Psoas muscle (tissue), 8 donors: ENCODE measurements at regions of chr20 and their contacts with region 1.

Region 1: DNA sequence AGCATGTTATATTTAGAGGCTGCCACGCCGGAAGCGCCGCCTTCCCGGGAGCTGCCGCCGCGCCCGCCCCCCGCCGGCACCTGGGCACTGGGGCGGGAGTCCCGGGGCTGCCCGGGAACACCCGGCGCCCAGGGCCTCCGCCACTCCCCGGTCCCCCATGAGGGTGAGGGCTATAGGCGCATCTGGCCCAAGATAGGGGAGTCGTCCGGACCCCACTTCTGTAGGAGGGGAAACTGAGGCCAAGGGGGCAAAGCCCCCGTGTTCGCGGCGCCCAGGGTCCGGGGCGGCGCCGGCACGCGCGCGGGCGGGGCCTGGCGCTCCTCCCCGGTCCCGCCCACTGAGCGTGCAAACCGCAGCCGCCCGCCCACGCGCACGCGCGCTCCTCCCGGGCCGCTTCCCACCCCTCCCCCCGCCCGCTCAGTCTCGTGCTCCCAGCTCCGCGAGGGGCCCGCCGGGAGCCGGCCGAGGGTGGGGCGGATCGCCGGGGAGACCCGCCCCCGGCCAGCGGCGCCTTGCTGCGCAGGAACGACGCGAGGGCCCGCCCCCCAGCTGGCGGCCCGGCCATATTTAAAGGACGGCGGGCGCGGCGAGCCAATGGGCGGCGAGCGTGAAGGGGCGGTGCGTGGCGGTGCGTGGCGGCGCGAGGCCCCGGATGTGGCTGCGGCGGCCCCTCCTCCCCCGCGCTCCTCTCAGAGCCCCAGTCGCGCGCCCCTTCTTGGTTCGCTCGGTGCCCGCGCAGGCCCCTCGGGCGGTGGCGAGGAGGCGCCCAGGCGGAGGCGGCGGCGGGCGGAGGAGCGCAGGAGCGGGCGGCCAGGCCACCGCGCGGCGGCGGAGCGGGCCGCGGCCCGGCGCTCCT is at the start of gene LSM14B:
- DNase-seq: peak; percentile 98
- ATAC-seq: peak; percentile 82 to 89 (median 83)
- H3K4me3 ChIP-seq: peak within 1 kb of the TSS; percentile 81
- H3K27ac ChIP-seq: peak within 1 kb of the TSS; percentile 99
- H3K4me1 ChIP-seq: peaks cover 59% of the 10 kb centered on the region
- H3K27me3 ChIP-seq: no peaks in the 10 kb centered on the region
- CTCF ChIP-seq: no peak
- total RNA-seq, gene LSM14B: 52.4 to 67.0 (median 60.8) TPM

Region 2: DNA sequence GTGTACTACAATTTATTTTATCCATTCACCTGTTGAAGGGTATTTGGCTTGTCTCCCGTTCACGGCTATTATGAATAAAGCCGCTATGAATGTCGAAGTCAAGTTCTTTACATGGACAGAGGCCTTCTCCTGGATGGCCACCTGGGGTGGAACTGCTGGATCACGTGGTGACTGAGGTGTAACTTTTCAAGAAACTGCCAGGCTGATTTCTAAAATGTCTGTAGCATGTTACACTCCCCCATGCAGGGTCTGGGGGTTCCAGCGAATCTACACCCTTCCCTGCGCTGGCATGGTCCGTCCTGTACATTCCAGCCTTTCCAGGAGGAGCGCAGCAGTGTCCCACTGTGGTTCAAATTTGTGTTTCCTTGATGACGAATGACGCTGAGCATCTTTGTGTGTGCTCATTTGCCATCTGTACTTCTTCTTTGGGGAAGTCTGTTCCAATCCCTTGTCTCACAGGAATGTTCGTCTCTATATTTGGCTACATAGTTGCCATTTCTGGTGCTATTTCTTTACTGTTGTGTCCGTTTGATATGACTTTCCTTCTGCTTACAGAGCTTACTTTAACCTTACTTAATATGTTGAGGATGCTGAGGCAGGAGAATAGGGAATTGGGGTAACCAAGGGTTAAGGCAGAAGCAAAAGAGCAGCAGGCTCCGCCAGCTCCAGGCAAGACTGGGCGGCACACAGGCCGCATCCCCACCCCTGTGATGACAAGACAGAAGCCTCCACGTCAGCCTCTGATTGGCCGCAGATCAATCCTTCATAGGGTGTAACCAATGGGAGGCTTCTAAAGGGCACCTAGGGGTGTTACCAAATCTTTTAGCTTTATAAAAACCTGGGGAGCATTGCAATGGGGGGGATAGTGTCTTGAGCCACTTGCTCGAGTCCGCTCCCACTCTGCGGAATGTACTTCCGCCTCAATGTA is 163.0 kb before region 1 on chr20:
- intact Hi-C with region 1: no loop called
- DNase-seq: no peak
- ATAC-seq: no peak
- H3K4me3 ChIP-seq: no peak overlapping the region
- H3K27ac ChIP-seq: no peak overlapping the region
- H3K4me1 ChIP-seq: no peaks in the 10 kb centered on the region
- H3K27me3 ChIP-seq: no peaks in the 10 kb centered on the region
- CTCF ChIP-seq: no peak

Region 3: DNA sequence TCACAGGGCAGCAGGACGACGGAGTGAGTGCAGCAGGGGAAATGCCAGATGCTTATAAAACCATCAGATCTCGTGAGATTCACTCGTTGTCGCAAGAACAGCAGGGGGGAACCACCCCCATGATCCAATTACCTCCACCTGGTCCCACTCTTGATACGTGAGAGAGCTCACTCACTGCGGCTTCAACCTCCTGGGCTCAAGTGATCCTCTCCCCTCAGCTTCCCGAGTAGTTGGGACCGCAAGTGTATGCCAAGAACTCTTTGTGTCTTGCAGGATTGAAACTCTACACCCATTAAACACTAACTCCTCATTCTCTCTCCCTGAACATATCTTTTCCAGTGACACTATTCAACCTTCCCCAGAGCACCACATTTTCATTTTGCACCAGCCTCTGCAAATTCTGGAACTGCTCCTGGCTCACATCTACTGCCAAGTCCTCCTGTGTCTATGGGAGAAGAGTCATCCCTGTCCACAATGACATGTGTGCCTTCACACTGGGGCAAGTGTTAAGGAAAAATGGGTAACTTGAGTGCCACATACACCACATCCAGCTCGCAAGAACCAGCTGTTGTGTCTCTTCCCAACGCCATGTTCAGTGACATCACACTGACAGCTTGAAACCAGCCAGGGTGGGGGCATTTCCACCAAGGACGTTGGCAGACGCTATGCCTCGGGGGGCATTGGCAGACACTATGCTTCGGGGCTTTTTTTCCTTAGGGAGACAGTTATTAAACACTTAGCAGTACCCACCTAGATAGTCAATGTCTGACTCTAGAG is 41.6 kb before region 1 on chr20:
- intact Hi-C with region 1: loop called in 1 of 2 experiments (anchors 5 kb)
- DNase-seq: no peak
- ATAC-seq: peak; percentile 75 to 83 (median 80)
- H3K4me3 ChIP-seq: no peak overlapping the region
- H3K27ac ChIP-seq: peak overlapping the region; percentile 10
- H3K4me1 ChIP-seq: no peaks in the 10 kb centered on the region
- H3K27me3 ChIP-seq: no peaks in the 10 kb centered on the region
- CTCF ChIP-seq: no peak